IMR-90 (cell line): ENCODE measurements at regions of chr11 and their contacts with region 1.

Region 1: GRCh38 chr11:57249384-57250319 is 12.6 kb upstream of the APLNR start:
- DNase-seq: peak; percentile 64
- ATAC-seq: peak; percentile 73
- H3K4me3 ChIP-seq: no peak overlapping the region
- H3K27ac ChIP-seq: no peak overlapping the region
- H3K4me1 ChIP-seq: no peaks in the 10 kb centered on the region; the same call in 1 of the 2 replicates
- H3K27me3 ChIP-seq: no peaks in the 10 kb centered on the region
- CTCF ChIP-seq: peak; percentile 96
- POLR2A ChIP-seq: peak; percentile 59
- RAD21 ChIP-seq: peak; percentile 97

Region 2: DNA sequence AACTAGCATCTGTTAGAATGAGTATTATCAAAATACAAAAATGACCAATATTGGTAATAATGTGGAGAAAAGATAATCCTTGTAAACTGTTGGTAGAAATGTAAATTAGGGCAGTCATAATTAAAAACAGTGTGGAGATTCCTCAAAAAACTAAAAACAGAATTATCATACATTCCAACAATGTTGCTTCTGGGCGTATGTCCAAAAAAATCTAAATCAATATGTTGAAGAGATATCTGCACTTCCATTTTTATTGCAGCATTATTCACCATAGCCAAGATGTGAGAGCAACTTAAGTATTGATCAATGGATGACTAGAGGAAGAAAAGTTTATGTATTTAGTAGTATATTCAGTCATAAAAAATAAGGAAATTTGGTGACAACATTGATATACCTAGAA is 441.3 kb before region 1 on chr11:
- CTCF ChIA-PET with region 1: no interaction called
- POLR2A ChIA-PET with region 1: no interaction called
- dilution Hi-C with region 1: no loop called
- in situ Hi-C with region 1: no loop called
- intact Hi-C with region 1: no loop called
- DNase-seq: no peak
- ATAC-seq: no peak
- H3K4me3 ChIP-seq: no peak overlapping the region
- H3K27ac ChIP-seq: no peak overlapping the region
- H3K4me1 ChIP-seq: no peaks in the 10 kb centered on the region
- H3K27me3 ChIP-seq: no peaks in the 10 kb centered on the region
- CTCF ChIP-seq: no peak
- POLR2A ChIP-seq: no peak
- RAD21 ChIP-seq: no peak

Region 3: DNA sequence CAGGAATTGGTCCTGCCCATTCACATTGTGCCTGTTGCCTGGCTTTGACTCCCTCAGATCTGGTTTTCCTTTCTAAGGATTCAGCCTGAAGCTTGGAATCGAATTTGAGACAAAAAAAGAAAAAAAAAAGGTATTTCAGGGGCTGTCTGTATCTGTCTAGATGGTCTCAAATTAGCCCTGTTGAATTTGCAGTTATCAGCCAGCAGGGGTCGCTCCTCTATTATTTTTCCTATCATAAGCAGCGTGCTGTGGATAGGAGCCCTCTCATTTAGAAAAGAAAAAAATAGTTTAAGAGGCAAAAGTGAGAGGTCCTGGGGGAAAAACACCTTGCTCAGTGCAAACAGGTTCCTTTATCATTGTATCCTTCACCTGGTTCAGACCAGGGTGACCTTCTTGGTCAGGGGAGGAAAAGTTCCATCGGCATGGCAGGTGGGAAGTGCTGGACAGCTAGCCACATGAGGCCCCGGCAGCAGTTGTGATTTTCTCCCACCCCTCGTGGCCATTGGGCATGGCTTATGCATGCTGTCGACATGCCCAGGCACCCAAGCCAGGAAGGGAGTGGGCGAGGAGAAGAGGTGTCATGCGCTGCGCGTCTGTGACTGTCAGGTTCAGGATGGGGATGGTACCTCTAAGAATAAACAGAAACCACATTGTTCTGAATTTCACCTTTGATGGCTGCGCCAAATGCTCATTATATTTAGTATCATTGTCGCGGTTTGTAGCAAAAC is 247.8 kb before region 1 on chr11:
- CTCF ChIA-PET with region 1: interaction called, 8 read pairs
- POLR2A ChIA-PET with region 1: no interaction called
- dilution Hi-C with region 1: no loop called
- in situ Hi-C with region 1: loop called (anchors 10 kb)
- intact Hi-C with region 1: loop called (anchors 1 kb)
- DNase-seq: peak; percentile 21
- ATAC-seq: peak; percentile 83
- H3K4me3 ChIP-seq: no peak overlapping the region
- H3K27ac ChIP-seq: no peak overlapping the region
- H3K4me1 ChIP-seq: no peaks in the 10 kb centered on the region
- H3K27me3 ChIP-seq: no peaks in the 10 kb centered on the region
- CTCF ChIP-seq: peak; percentile 72
- POLR2A ChIP-seq: no peak
- RAD21 ChIP-seq: peak; percentile 77

Region 4: GRCh38 chr11:57116654-57117053 is 133.0 kb before region 1 on chr11:
- CTCF ChIA-PET with region 1: interaction called, 24 read pairs
- POLR2A ChIA-PET with region 1: no interaction called
- dilution Hi-C with region 1: no loop called
- in situ Hi-C with region 1: no loop called
- intact Hi-C with region 1: loop called (anchors 1 kb)
- DNase-seq: peak; percentile 44
- ATAC-seq: peak; percentile 67
- H3K4me3 ChIP-seq: no peak overlapping the region
- H3K27ac ChIP-seq: no peak overlapping the region
- H3K4me1 ChIP-seq: no peaks in the 10 kb centered on the region
- H3K27me3 ChIP-seq: no peaks in the 10 kb centered on the region
- CTCF ChIP-seq: peak; percentile 54
- POLR2A ChIP-seq: no peak
- RAD21 ChIP-seq: peak; percentile 65

Region 5: DNA sequence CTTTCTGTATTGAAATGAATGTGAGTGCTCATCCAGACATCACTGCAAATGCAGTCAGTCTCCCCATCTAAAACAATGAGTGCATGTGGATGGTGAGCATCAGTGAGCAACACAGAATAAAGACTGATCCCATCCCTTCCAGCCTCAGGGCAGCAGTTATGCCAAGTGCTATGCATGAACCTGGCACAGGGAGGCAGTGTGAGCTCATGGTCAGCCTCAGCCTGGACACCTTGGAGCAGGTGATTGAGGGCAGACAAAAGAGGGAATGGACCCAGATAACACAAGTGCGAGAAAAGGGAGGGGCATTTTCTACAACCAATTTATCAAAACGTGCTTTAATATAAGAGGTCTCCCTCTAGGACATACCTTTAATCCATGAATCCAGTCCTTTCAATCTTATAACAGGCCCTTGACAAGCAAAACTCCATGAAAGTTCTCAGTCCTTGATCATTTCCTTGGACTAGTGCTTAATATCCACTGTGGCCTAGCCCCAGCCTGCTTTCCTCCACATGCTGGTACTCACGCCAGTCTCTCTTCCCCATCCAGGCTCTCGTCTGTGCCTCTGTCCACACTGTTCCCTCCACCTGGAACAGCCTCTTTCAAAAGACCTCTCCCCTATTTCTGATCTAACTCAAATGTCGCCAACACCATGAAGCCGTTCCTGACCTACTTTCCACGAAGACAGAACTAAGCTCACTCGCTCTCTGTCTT is 118.4 kb before region 1 on chr11:
- CTCF ChIA-PET with region 1: interaction called, 26 read pairs
- POLR2A ChIA-PET with region 1: no interaction called
- dilution Hi-C with region 1: no loop called
- in situ Hi-C with region 1: loop called (anchors 5 kb)
- intact Hi-C with region 1: loop called (anchors 1 kb)
- DNase-seq: peak; percentile 13
- ATAC-seq: peak; percentile 77
- H3K4me3 ChIP-seq: no peak overlapping the region
- H3K27ac ChIP-seq: no peak overlapping the region
- H3K4me1 ChIP-seq: no peaks in the 10 kb centered on the region
- H3K27me3 ChIP-seq: peaks cover 7% of the 10 kb centered on the region; the same call in 1 of the 2 replicates
- CTCF ChIP-seq: peak; percentile 65
- POLR2A ChIP-seq: no peak
- RAD21 ChIP-seq: peak; percentile 80

Region 6: DNA sequence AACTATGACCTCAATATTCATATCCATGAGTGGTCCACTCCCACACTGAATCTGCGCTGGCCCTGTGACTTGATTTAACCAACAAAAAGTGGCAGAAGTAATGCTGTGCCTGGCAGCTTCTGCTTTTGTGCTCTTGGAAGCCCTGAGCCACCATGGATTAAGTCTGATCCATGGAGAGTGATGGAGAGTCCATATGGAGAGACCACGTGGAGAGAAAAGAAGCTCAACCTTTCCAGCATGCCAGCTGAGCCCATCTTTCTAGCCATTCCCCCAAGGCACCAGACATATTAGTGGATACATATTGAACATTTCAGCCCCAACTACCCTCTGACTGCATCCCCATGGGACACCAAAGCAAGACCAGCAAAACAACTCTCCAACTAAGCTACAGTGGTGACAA is 51.9 kb before region 1 on chr11:
- CTCF ChIA-PET with region 1: no interaction called
- POLR2A ChIA-PET with region 1: no interaction called
- dilution Hi-C with region 1: no loop called
- in situ Hi-C with region 1: no loop called
- intact Hi-C with region 1: no loop called
- DNase-seq: no peak
- ATAC-seq: no peak
- H3K4me3 ChIP-seq: no peak overlapping the region
- H3K27ac ChIP-seq: no peak overlapping the region
- H3K4me1 ChIP-seq: no peaks in the 10 kb centered on the region
- H3K27me3 ChIP-seq: peaks cover 21% of the 10 kb centered on the region
- CTCF ChIP-seq: no peak
- POLR2A ChIP-seq: no peak
- RAD21 ChIP-seq: no peak

Region 7: GRCh38 chr11:57277845-57278709 is 28.4 kb after region 1 on chr11:
- CTCF ChIA-PET with region 1: interaction called, 15 read pairs
- POLR2A ChIA-PET with region 1: interaction called, 6 read pairs
- dilution Hi-C with region 1: no loop called
- in situ Hi-C with region 1: no loop called
- intact Hi-C with region 1: loop called (anchors 1 kb)
- DNase-seq: peak; percentile 84
- ATAC-seq: peak; percentile 89
- H3K4me3 ChIP-seq: peak overlapping the region; percentile 13; the same call in 1 of the 2 replicates
- H3K27ac ChIP-seq: peak overlapping the region; percentile 84
- H3K4me1 ChIP-seq: peaks cover 29% of the 10 kb centered on the region
- H3K27me3 ChIP-seq: no peaks in the 10 kb centered on the region
- CTCF ChIP-seq: peak; percentile 90
- POLR2A ChIP-seq: no peak
- RAD21 ChIP-seq: peak; percentile 76

Region 8: GRCh38 chr11:57597916-57598830 is 348.5 kb after region 1 on chr11:
- CTCF ChIA-PET with region 1: no interaction called
- POLR2A ChIA-PET with region 1: no interaction called
- dilution Hi-C with region 1: no loop called
- in situ Hi-C with region 1: no loop called
- intact Hi-C with region 1: no loop called
- DNase-seq: peak; percentile 24
- ATAC-seq: peak; percentile 89
- H3K4me3 ChIP-seq: peak overlapping the region; percentile 57
- H3K27ac ChIP-seq: peak overlapping the region; percentile 60
- H3K4me1 ChIP-seq: peaks cover 5% of the 10 kb centered on the region; the same call in 1 of the 2 replicates
- H3K27me3 ChIP-seq: peaks cover 16% of the 10 kb centered on the region
- CTCF ChIP-seq: no peak
- POLR2A ChIP-seq: no peak
- RAD21 ChIP-seq: no peak